ENCODE measurements at regions of chr4 and their contacts with region 1.

Region 1: GRCh38 chr4:177339477-177340374 is 30.1 kb downstream of the NEIL3 start:
- DNase-seq: peak in 3 of 14 experiments; percentile 61 to 63 (median 62)
- ATAC-seq: peak; percentile 91
- H3K4me3 ChIP-seq: no peak overlapping the region
- H3K4me3 Mint-ChIP-seq: no peak overlapping the region
- H3K27ac ChIP-seq: no peak overlapping the region
- H3K27ac Mint-ChIP-seq: no peak overlapping the region
- H3K4me1 ChIP-seq: no peaks in the 10 kb centered on the region
- H3K4me1 Mint-ChIP-seq: peaks cover 9% of the 10 kb centered on the region
- H3K27me3 ChIP-seq: no peaks in the 10 kb centered on the region
- H3K27me3 Mint-ChIP-seq: no peaks in the 10 kb centered on the region
- CTCF ChIP-seq: peak; percentile 66

Region 2: GRCh38 chr4:176377780-176378179 is 961.9 kb before region 1 on chr4:
- CTCF ChIA-PET with region 1: no interaction called
- POLR2A ChIA-PET with region 1: no interaction called
- intact Hi-C with region 1: loop called (anchors 5 kb)
- DNase-seq: peak in 1 of 14 experiments; percentile 3
- ATAC-seq: no peak
- H3K4me3 ChIP-seq: no peak overlapping the region
- H3K4me3 Mint-ChIP-seq: no peak overlapping the region
- H3K27ac ChIP-seq: no peak overlapping the region
- H3K27ac Mint-ChIP-seq: no peak overlapping the region
- H3K4me1 ChIP-seq: no peaks in the 10 kb centered on the region
- H3K4me1 Mint-ChIP-seq: no peaks in the 10 kb centered on the region
- H3K27me3 ChIP-seq: no peaks in the 10 kb centered on the region
- H3K27me3 Mint-ChIP-seq: no peaks in the 10 kb centered on the region
- CTCF ChIP-seq: no peak

Region 3: DNA sequence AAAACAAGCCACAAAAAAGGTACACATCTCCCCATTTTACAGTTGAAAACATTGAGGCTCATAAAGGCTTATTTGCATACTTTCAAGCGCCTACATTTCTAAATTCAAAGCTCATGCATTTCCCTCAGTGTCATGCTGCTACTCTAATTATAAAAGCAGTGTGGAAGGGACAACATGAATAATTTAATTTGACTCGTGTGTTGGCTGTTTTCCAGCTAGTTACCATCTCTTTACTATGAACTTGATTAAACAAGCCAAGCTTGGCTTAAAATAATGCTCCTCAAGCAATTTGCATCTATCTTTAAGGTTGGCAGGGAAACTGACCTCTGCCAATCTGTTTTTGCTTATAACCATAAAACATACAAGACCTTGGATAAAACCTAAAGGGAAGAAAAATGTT is 282.5 kb before region 1 on chr4:
- CTCF ChIA-PET with region 1: no interaction called
- POLR2A ChIA-PET with region 1: no interaction called
- intact Hi-C with region 1: loop called in 1 of 2 experiments (anchors 5 kb)
- DNase-seq: no peak
- ATAC-seq: no peak
- H3K4me3 ChIP-seq: no peak overlapping the region
- H3K4me3 Mint-ChIP-seq: no peak overlapping the region
- H3K27ac ChIP-seq: no peak overlapping the region
- H3K27ac Mint-ChIP-seq: no peak overlapping the region
- H3K4me1 ChIP-seq: no peaks in the 10 kb centered on the region
- H3K4me1 Mint-ChIP-seq: no peaks in the 10 kb centered on the region
- H3K27me3 ChIP-seq: no peaks in the 10 kb centered on the region
- H3K27me3 Mint-ChIP-seq: peaks cover 16% of the 10 kb centered on the region
- CTCF ChIP-seq: no peak

Region 4: DNA sequence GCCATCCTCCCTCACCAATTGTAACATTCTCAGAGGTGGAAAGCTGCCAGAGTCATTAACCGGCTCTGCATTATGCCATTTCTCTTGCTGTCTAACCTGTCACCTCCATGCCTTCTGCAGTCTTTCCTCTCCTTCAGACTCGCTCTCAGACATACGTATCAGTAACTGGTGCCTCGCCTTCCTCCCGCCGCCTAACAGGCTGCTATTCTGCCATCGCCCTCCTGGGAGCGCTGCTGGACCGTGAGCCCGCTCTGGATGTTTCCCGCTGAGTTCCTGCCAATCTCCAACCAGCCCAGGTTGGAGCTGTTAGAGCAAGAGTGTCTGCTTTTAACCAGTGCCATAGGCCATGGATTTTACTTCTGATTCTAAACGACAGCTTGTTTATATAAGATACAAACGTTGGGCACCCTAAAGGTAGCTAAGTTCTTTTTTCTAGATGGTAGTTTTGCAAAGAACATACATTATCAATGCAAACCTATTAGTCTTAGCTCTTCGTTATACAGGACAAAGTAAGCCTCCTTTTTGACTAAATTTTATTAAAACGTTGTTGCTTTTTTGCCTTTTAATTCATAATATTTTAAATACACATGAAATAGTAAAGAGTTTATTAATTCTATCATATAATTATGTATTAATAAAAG is 89.5 kb before region 1 on chr4:
- CTCF ChIA-PET with region 1: interaction called, 26 read pairs
- POLR2A ChIA-PET with region 1: interaction called, 3 read pairs
- intact Hi-C with region 1: loop called (anchors 1 kb)
- DNase-seq: peak; percentile 33 to 82 (median 56)
- ATAC-seq: peak; percentile 98
- H3K4me3 ChIP-seq: no peak overlapping the region
- H3K4me3 Mint-ChIP-seq: peak overlapping the region; percentile 4
- H3K27ac ChIP-seq: no peak overlapping the region
- H3K27ac Mint-ChIP-seq: no peak overlapping the region
- H3K4me1 ChIP-seq: peaks cover 9% of the 10 kb centered on the region
- H3K4me1 Mint-ChIP-seq: peaks cover 12% of the 10 kb centered on the region
- H3K27me3 ChIP-seq: peaks cover 0 to 5% of the 10 kb centered on the region in 2 experiments
- H3K27me3 Mint-ChIP-seq: peaks cover 14% of the 10 kb centered on the region
- CTCF ChIP-seq: peak; percentile 82

Measured in CD4-positive, alpha-beta T cell (primary cell).